Ovary (tissue), 10 donors: ENCODE measurements at regions of chr22 and their contacts with region 1.

Region 1: GRCh38 chr22:33853200-33854097 is 66.8 kb downstream of the LARGE1 start:
- DNase-seq: peak; percentile 47 to 69 (median 59)
- H3K4me3 ChIP-seq: peak overlapping the region; percentile 42
- H3K27ac ChIP-seq: peak overlapping the region in 1 of 2 donors; percentile 22
- H3K4me1 ChIP-seq: peaks cover 6% of the 10 kb centered on the region
- H3K27me3 ChIP-seq: no peaks in the 10 kb centered on the region
- CTCF ChIP-seq: no peak
- EP300 ChIP-seq: no peak
- POLR2A ChIP-seq: no peak

Region 2: GRCh38 chr22:33361581-33361980 is 491.9 kb before region 1 on chr22:
- intact Hi-C with region 1: no loop called
- DNase-seq: no peak
- H3K4me3 ChIP-seq: no peak overlapping the region
- H3K27ac ChIP-seq: no peak overlapping the region
- H3K4me1 ChIP-seq: no peaks in the 10 kb centered on the region
- H3K27me3 ChIP-seq: no peaks in the 10 kb centered on the region
- CTCF ChIP-seq: no peak
- EP300 ChIP-seq: no peak
- POLR2A ChIP-seq: no peak

Region 3: GRCh38 chr22:33803371-33804282 is 49.8 kb before region 1 on chr22:
- intact Hi-C with region 1: loop called in 1 of 4 experiments (anchors 10 kb)
- DNase-seq: peak in 1 of 5 donors; percentile 14
- H3K4me3 ChIP-seq: no peak overlapping the region
- H3K27ac ChIP-seq: peak overlapping the region; percentile 14 to 29
- H3K4me1 ChIP-seq: peaks cover 9% of the 10 kb centered on the region
- H3K27me3 ChIP-seq: no peaks in the 10 kb centered on the region
- CTCF ChIP-seq: no peak
- EP300 ChIP-seq: no peak
- POLR2A ChIP-seq: no peak

Region 4: GRCh38 chr22:34017205-34017604 is 163.8 kb after region 1 on chr22:
- intact Hi-C with region 1: no loop called
- DNase-seq: no peak
- H3K4me3 ChIP-seq: no peak overlapping the region
- H3K27ac ChIP-seq: no peak overlapping the region
- H3K4me1 ChIP-seq: no peaks in the 10 kb centered on the region
- H3K27me3 ChIP-seq: no peaks in the 10 kb centered on the region
- CTCF ChIP-seq: no peak
- EP300 ChIP-seq: no peak
- POLR2A ChIP-seq: no peak